Calu3 (cell line): ENCODE measurements at regions of chr2 and their contacts with region 1.

Region 1: DNA sequence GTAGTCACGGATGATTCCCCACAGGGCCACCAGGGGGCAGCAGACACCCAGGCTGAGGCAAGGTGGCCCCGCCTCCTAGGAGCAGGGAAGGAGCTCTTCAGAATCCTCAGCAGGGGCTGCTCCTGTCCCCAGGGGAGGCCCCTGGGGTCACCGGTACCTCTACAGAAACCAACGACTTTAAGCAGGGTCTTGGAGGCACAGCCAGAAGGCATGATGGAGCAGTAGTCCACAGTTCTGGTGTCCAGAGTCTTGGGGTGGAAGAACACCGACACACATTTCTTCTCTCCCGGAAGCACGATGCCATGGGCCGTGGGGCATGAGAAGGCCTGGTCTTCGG is 11.5 kb downstream of the CFAP65 start:
- DNase-seq: peak; percentile 92
- H3K4me3 Mint-ChIP-seq: no peak overlapping the region
- H3K27ac Mint-ChIP-seq: no peak overlapping the region
- H3K4me1 Mint-ChIP-seq: no peaks in the 10 kb centered on the region
- H3K27me3 Mint-ChIP-seq: no peaks in the 10 kb centered on the region
- CTCF ChIP-seq: peak; percentile 96

Region 2: GRCh38 chr2:218972737-218973136 is 57.1 kb before region 1 on chr2:
- CTCF ChIA-PET with region 1: no interaction called
- intact Hi-C with region 1: no loop called
- DNase-seq: no peak
- H3K4me3 Mint-ChIP-seq: no peak overlapping the region
- H3K27ac Mint-ChIP-seq: no peak overlapping the region
- H3K4me1 Mint-ChIP-seq: no peaks in the 10 kb centered on the region
- H3K27me3 Mint-ChIP-seq: peaks cover 78% of the 10 kb centered on the region
- CTCF ChIP-seq: no peak

Region 3: DNA sequence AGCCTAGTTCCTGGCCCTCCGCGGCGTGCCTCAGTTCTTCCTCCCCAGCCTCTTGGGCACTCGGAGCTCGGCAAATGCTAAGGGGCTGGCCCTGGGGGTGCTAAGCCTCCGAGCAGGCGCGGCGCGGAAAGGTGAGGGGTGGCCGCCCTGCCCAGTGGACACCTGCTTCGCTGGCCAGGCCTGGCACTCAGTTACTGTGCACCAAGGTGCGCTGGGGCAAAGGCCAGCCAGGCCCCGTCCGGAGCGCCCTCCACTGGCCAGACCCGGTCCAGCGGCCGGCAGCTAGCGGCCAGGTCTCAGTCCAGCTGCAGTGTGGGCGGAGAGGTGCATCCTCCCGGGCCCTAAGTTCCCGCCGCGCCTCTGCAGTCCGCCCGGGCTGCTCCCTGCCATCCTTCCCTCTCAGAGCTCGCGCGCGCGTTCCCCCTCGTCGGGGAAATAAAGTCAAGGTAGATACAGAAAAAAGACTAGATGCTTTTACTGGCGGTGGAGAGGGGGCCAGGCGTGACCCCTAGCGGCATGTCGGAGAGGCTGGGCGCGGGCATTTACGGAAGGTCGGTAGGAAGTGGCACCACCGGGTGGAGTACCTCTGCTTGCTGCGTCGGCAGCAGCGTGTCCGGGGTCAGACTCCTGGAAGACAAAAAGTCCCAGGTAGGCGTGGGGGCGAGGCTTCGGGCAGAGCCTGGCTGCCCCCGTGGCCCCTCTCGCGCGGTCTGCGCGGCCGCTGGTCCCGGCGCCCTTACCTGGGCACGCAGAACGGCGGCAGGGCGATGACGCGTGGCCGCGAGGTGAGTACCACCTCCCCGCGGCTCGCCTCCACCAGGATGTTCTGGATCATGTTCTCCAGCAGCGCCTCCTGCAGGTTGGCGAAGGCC is 27.2 kb before region 1 on chr2:
- CTCF ChIA-PET with region 1: interaction called, 11 read pairs
- intact Hi-C with region 1: no loop called
- DNase-seq: peak; percentile 86
- H3K4me3 Mint-ChIP-seq: peak overlapping the region; percentile 76
- H3K27ac Mint-ChIP-seq: no peak overlapping the region
- H3K4me1 Mint-ChIP-seq: peaks cover 31% of the 10 kb centered on the region
- H3K27me3 Mint-ChIP-seq: peaks cover 60% of the 10 kb centered on the region
- CTCF ChIP-seq: peak; percentile 65

Region 4: DNA sequence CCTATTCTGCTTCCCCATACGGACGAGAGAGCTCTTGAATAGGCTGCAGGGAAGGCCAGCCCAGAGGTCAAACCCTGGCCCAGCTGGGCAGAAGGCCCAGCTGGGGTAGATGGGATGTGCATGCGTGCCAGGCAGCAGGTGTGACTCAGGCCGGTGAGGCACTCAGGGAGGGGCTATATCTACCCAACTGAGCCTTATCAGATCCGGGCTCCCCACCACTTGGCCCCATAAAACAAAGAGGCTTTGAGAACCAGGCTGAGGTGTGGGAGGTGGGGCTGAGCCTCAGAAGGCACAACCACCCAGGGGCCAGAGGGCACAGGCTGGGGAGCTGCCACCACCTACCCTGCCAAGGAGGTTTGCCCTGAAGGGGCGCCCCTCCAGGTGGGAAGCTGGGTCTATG is 19.5 kb after region 1 on chr2:
- CTCF ChIA-PET with region 1: interaction called, 17 read pairs
- intact Hi-C with region 1: no loop called
- DNase-seq: peak; percentile 91
- H3K4me3 Mint-ChIP-seq: peak overlapping the region; percentile 25
- H3K27ac Mint-ChIP-seq: peak overlapping the region; percentile 55
- H3K4me1 Mint-ChIP-seq: peaks cover 48% of the 10 kb centered on the region
- H3K27me3 Mint-ChIP-seq: no peaks in the 10 kb centered on the region
- CTCF ChIP-seq: no peak

Region 5: DNA sequence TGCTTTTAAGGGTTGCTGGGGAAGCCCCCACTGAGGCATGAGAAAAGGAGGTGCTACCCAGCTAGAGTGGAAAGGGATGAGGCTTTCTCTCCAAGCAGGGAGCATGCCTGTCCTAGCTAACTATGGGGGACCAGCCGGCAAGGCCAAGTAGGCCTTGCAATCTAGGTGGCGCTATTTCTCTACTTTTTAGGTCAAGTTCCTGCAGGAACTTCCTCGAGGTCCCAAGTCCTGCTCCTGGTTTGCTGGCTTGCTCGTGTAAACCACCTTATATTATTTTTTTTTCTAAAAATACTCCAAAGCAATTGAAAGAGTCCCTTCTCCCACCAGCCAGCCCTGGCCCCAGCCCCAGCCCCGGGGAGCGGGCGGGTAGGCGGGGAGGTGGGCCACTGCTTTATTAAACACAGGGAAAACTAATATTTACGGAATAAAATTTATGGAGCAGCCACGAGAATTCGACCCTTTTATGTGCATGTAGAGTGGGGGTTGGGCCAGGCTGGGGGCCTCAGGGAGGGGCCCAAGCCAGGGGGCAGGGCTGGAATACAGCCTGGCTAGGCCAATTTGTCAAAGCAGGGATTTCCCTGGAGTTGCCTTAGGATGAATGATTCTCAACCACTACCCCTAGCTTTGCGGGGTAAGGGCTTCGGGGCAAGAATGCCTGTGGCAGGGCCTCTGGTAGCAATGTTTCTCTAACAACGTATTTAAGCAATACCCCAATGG is 43.8 kb after region 1 on chr2:
- CTCF ChIA-PET with region 1: interaction called, 10 read pairs
- intact Hi-C with region 1: no loop called
- DNase-seq: peak; percentile 58
- H3K4me3 Mint-ChIP-seq: no peak overlapping the region
- H3K27ac Mint-ChIP-seq: no peak overlapping the region
- H3K4me1 Mint-ChIP-seq: peaks cover 24% of the 10 kb centered on the region
- H3K27me3 Mint-ChIP-seq: no peaks in the 10 kb centered on the region
- CTCF ChIP-seq: peak; percentile 77

Region 6: DNA sequence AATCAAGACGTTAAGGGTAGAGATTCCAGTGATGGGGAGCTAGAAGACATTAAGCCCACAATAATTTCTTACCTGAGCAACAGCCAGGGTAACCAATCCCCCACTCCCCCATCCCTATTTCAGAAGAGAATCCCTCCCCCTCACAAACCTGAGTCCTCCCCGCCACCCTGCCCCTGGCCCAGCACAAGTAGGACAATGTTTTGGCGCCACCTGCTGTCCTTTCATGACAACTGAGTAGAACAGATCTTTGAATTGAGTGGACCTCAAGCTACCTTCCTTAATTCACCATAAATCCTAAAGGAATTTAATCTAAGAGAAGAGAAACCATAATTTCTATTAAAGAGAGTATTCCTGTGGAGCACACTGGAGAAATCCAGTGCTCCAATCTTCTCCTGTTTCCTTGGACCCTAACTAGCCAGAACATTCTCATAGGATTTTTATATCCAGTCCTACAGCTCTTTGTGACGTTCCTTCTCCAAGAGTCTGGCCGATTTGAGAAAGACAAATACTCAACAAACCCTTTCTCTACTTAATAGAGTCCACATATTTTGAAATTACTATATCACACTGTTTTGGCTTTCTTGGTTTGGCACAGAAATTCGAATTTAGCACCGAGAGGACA is 89.7 kb after region 1 on chr2:
- CTCF ChIA-PET with region 1: interaction called, 71 read pairs
- intact Hi-C with region 1: loop called (anchors 1 kb)
- DNase-seq: peak; percentile 75
- H3K4me3 Mint-ChIP-seq: no peak overlapping the region
- H3K27ac Mint-ChIP-seq: no peak overlapping the region
- H3K4me1 Mint-ChIP-seq: peaks cover 38% of the 10 kb centered on the region
- H3K27me3 Mint-ChIP-seq: no peaks in the 10 kb centered on the region
- CTCF ChIP-seq: peak; percentile 46